ENCODE measurements at regions of chr4 and their contacts with region 1.

Region 1: GRCh38 chr4:153573881-153574802 is 108.0 kb downstream of the TMEM131L start:
- DNase-seq: peak; percentile 37
- ATAC-seq: peak; percentile 87
- H3K4me3 ChIP-seq: no peak overlapping the region
- H3K27ac ChIP-seq: peak overlapping the region; percentile 11; the same call in 1 of the 2 replicates
- H3K4me1 ChIP-seq: peaks cover 10 to 12% of the 10 kb centered on the region in 2 experiments; a peak in 3 of 4 replicates
- H3K27me3 ChIP-seq: no peaks in the 10 kb centered on the region
- CTCF ChIP-seq: peak; percentile 50 to 88 (median 61)
- POLR2A ChIP-seq: no peak
- RAD21 ChIP-seq: peak; percentile 97

Region 2: GRCh38 chr4:152843481-152844090 is 730.6 kb before region 1 on chr4:
- CTCF ChIA-PET with region 1: no interaction called
- POLR2A ChIA-PET with region 1: no interaction called
- RAD21 ChIA-PET with region 1: no interaction called
- intact Hi-C with region 1: loop called (anchors 10 kb)
- DNase-seq: no peak
- ATAC-seq: no peak
- H3K4me3 ChIP-seq: no peak overlapping the region
- H3K27ac ChIP-seq: no peak overlapping the region
- H3K4me1 ChIP-seq: no peaks in the 10 kb centered on the region
- H3K27me3 ChIP-seq: no peaks in the 10 kb centered on the region
- CTCF ChIP-seq: no peak
- POLR2A ChIP-seq: no peak
- RAD21 ChIP-seq: no peak

Region 3: GRCh38 chr4:153232768-153233167 is 341.4 kb before region 1 on chr4:
- CTCF ChIA-PET with region 1: no interaction called
- POLR2A ChIA-PET with region 1: no interaction called
- RAD21 ChIA-PET with region 1: no interaction called
- intact Hi-C with region 1: loop called (anchors 1 kb)
- DNase-seq: peak; percentile 27
- ATAC-seq: peak; percentile 82
- H3K4me3 ChIP-seq: no peak overlapping the region
- H3K27ac ChIP-seq: peak overlapping the region; percentile 63; the same call in 1 of the 2 replicates
- H3K4me1 ChIP-seq: peaks cover 37% of the 10 kb centered on the region in 2 experiments
- H3K27me3 ChIP-seq: no peaks in the 10 kb centered on the region
- CTCF ChIP-seq: peak; percentile 50 to 55 (median 52)
- POLR2A ChIP-seq: no peak
- RAD21 ChIP-seq: peak; percentile 67

Region 4: DNA sequence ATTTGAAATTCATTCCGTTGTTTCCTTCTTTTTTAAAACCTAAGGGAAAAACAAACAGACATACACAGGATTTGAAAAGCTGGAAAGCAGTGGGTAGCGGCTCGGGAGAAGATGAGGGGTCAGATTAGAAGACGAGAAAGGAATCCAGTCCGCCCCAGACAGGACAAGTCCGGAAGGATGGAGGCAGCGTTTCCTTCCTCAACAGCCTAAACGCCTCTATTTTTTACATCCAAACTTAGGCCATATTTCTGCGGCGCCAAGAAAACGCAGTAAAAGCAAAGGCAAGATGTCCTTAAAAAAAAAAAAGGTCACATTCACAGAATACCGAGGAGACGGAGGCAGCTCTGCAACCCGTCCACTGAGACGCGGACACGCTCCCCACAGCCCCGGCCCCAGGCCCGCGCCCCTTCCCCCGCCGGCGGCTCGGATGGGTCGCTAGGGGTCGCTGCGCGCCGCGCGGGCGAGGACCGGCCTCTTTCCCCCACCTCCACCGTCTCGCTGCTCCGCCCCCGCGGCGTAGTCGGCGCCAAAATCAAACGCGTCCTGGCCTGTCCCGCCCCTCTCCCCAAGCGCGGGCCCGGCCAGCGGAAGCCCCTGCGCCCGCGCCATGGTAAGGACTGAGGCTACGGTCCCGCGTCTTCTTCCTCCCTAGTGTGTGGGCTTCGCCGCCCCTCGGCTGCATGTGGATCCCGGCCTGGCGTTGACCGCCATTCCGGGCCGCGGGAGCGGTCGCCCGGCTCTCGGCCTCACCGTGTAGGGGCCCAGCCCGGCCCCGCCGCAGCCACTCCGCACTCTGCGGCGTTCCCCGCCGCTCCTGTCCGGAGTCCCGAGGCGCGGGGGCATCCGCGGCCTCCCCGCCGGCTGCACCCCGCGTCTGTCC is 229.8 kb before region 1 on chr4 and contains the start of gene MND1:
- CTCF ChIA-PET with region 1: interaction called, 7 read pairs
- POLR2A ChIA-PET with region 1: no interaction called
- RAD21 ChIA-PET with region 1: interaction called in 1 of 2 experiments, 3 read pairs
- intact Hi-C with region 1: loop called (anchors 1 kb)
- DNase-seq: peak; percentile 68
- ATAC-seq: peak; percentile 89
- H3K4me3 ChIP-seq: peak within 1 kb of the TSS; percentile 67 to 78
- H3K27ac ChIP-seq: peak within 1 kb of the TSS; percentile 79
- H3K4me1 ChIP-seq: peaks cover 18 to 37% of the 10 kb centered on the region in 2 experiments
- H3K27me3 ChIP-seq: no peaks in the 10 kb centered on the region
- CTCF ChIP-seq: peak; percentile 66 to 84 (median 81)
- POLR2A ChIP-seq: peak; percentile 1
- RAD21 ChIP-seq: peak; percentile 86
- total RNA-seq, gene MND1: 29.9 TPM

Region 5: DNA sequence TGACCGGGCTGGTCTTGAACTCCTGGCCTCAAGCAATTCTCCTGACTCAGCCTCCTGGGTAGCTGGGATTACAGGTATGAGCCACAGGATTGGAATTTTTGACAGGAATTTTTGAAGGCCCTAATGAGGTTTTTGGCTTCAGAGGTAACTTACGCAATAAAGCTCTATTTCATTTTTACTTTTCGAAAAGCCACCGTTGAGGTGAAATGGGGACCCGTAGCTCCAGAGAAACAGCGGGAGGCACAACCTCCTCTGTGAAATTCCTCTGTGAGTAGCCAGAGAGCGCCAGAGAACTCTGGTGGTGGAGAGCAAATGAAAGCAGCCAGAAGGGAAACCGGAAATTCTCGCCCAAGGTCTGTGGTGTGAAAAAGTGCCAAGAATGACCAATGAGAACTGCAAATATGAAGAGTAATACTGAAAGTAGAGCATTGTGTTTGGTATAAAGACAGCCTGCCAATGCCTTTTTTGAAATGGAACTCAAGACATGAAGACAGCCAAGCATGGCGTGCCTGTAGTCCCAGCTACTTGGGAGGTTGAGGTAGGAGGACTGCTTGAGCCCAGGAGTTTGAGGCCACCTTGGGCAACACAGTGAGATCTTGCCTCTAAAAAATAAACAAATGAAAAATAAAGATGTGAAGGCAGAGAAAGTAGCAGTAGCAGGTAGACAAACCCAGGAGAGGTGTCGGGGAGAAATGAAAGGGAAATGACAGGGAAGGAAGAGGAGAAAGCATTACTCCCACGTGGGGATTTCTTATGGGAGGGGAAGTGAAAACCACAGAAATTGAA is 141.0 kb before region 1 on chr4:
- CTCF ChIA-PET with region 1: interaction called, 28 read pairs
- POLR2A ChIA-PET with region 1: no interaction called
- RAD21 ChIA-PET with region 1: interaction called, 8 read pairs
- intact Hi-C with region 1: loop called (anchors 1 kb)
- DNase-seq: peak; percentile 77
- ATAC-seq: peak; percentile 90
- H3K4me3 ChIP-seq: peak overlapping the region in 1 of 2 experiments; percentile 32; a peak in 2 of 4 replicates
- H3K27ac ChIP-seq: peak overlapping the region; percentile 44; the same call in 1 of the 2 replicates
- H3K4me1 ChIP-seq: peaks cover 14 to 19% of the 10 kb centered on the region in 2 experiments
- H3K27me3 ChIP-seq: no peaks in the 10 kb centered on the region
- CTCF ChIP-seq: peak; percentile 75 to 92 (median 85)
- POLR2A ChIP-seq: no peak
- RAD21 ChIP-seq: peak; percentile 98

Region 6: DNA sequence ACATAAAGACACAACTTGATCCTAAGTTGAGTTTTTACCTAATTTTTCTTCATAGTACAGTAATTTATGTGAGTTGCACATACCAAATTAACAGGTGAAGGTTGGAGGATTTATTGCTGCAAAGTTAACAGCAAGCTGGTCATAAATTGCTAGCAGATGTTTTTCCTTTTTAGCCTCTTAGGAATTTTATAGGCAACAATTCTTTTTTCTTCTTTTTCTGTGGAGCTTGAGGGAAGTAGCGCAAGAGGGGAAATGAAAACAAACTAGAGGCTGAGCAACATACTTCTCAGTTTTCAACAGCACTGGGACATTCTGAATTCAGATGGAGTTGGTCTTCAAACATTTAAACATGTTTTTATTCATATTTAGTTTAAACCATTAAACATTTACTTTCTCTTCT is 46.2 kb after region 1 on chr4:
- CTCF ChIA-PET with region 1: no interaction called
- POLR2A ChIA-PET with region 1: no interaction called
- RAD21 ChIA-PET with region 1: no interaction called
- intact Hi-C with region 1: no loop called
- DNase-seq: no peak
- ATAC-seq: no peak
- H3K4me3 ChIP-seq: no peak overlapping the region
- H3K27ac ChIP-seq: no peak overlapping the region
- H3K4me1 ChIP-seq: peaks cover 0 to 9% of the 10 kb centered on the region in 2 experiments; a peak in 2 of 4 replicates
- H3K27me3 ChIP-seq: no peaks in the 10 kb centered on the region
- CTCF ChIP-seq: no peak
- POLR2A ChIP-seq: no peak
- RAD21 ChIP-seq: no peak

Measured in HCT116 (cell line).